ENCODE measurements at regions of chr6 and their contacts with region 1.

Region 1: GRCh38 chr6:150891888-150892485 is 26.5 kb downstream of the MTHFD1L start:
- DNase-seq: peak; percentile 67
- H3K4me3 Mint-ChIP-seq: no peak overlapping the region
- H3K27ac Mint-ChIP-seq: peak overlapping the region; percentile 16
- H3K4me1 Mint-ChIP-seq: peaks cover 49% of the 10 kb centered on the region
- H3K27me3 Mint-ChIP-seq: no peaks in the 10 kb centered on the region

Region 2: GRCh38 chr6:150343434-150343833 is 548.6 kb before region 1 on chr6:
- CTCF ChIA-PET with region 1: no interaction called
- POLR2A ChIA-PET with region 1: no interaction called
- DNase-seq: no peak
- H3K4me3 Mint-ChIP-seq: no peak overlapping the region
- H3K27ac Mint-ChIP-seq: no peak overlapping the region
- H3K4me1 Mint-ChIP-seq: no peaks in the 10 kb centered on the region
- H3K27me3 Mint-ChIP-seq: peaks cover 12% of the 10 kb centered on the region

Region 3: GRCh38 chr6:150902142-150902776 is 10.3 kb after region 1 on chr6:
- CTCF ChIA-PET with region 1: interaction called, 22 read pairs
- POLR2A ChIA-PET with region 1: interaction called, 3 read pairs
- DNase-seq: no peak
- H3K4me3 Mint-ChIP-seq: no peak overlapping the region
- H3K27ac Mint-ChIP-seq: no peak overlapping the region
- H3K4me1 Mint-ChIP-seq: peaks cover 14% of the 10 kb centered on the region
- H3K27me3 Mint-ChIP-seq: no peaks in the 10 kb centered on the region

Region 4: DNA sequence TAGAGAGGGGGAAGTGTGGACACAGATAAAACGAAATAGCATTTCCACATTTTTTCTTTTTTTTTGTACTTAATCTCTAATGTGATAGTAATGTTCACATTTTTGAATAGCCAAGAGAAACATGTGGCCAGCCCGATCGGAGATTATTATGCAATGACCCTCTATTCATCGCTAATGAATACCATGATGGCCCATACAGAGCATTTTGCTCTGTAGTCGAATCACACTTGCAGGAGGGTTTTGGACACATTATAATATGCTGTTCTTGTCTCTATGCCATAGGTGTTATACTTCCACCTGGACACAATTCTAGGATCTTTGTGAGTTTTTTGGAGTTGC is 33.6 kb after region 1 on chr6:
- CTCF ChIA-PET with region 1: interaction called, 15 read pairs
- POLR2A ChIA-PET with region 1: no interaction called
- DNase-seq: no peak
- H3K4me3 Mint-ChIP-seq: no peak overlapping the region
- H3K27ac Mint-ChIP-seq: no peak overlapping the region
- H3K4me1 Mint-ChIP-seq: no peaks in the 10 kb centered on the region
- H3K27me3 Mint-ChIP-seq: no peaks in the 10 kb centered on the region

Region 5: GRCh38 chr6:151004415-151005024 is 112.5 kb after region 1 on chr6:
- CTCF ChIA-PET with region 1: interaction called, 66 read pairs
- POLR2A ChIA-PET with region 1: interaction called, 3 read pairs
- DNase-seq: no peak
- H3K4me3 Mint-ChIP-seq: no peak overlapping the region
- H3K27ac Mint-ChIP-seq: peak overlapping the region; percentile 64
- H3K4me1 Mint-ChIP-seq: peaks cover 18% of the 10 kb centered on the region
- H3K27me3 Mint-ChIP-seq: no peaks in the 10 kb centered on the region

Region 6: DNA sequence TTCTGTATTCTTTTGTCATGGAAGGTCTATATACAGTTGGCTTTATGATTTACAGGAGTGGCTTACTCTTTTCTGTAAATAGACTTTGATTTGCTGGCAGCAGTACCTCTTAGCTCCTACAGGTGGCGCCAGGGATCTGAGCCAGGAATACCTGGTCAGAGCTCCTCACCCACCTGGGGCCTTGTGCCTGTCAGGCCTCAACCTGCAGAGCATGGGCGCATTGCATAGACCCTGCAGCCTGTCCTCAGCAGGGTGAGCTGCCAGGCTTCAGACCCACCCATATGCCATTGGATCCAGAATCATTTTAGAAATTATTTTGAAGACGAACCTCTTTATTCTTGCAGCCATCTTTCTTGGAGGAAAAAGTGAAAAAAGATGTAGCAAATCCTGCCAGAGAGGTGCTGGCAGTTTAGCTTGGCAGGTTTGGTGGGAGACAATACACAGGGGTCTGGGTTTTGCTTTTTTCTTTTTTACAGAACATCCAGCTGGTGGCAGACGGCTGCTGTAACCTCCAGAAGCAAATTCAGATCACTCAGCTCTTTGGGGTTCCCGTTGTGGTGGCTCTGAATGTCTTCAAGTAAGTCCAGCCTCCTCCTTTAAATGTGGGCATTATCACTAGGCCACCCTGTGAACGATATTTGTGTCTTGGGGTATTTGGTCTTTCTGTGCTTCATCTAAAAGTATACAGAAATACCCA is 122.6 kb after region 1 on chr6:
- CTCF ChIA-PET with region 1: interaction called, 66 read pairs
- POLR2A ChIA-PET with region 1: no interaction called
- DNase-seq: peak; percentile 62
- H3K4me3 Mint-ChIP-seq: no peak overlapping the region
- H3K27ac Mint-ChIP-seq: peak overlapping the region; percentile 14
- H3K4me1 Mint-ChIP-seq: peaks cover 13% of the 10 kb centered on the region
- H3K27me3 Mint-ChIP-seq: no peaks in the 10 kb centered on the region

Region 7: DNA sequence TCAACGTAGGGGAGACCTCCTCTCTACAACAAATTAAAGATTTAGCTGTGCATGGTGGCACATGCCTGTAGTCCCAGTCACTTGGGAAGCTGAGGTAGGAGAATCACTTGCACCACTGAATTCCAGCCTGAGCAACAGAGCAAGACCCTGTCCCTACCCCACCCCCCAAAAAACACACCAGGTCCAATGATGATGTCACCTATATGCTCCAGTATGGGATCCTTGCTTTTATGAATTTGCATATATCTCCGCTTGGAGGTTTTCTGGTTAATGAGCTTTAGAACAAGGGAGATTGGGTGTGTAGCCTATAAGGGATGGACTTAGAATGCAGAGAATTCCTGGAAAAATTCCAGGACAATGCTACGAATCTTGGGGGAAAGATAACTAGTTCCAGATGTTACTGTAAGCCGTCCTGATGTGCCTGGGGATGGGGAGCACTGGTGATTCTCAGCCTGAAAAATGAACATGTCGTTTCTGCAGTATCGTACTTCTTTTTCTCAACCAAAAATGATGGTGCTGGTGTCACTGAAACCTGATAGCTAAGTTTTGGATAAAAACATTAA is 438.2 kb after region 1 on chr6:
- CTCF ChIA-PET with region 1: interaction called, 247 read pairs
- POLR2A ChIA-PET with region 1: interaction called, 13 read pairs
- DNase-seq: no peak
- H3K4me3 Mint-ChIP-seq: no peak overlapping the region
- H3K27ac Mint-ChIP-seq: no peak overlapping the region
- H3K4me1 Mint-ChIP-seq: peaks cover 8% of the 10 kb centered on the region
- H3K27me3 Mint-ChIP-seq: peaks cover 41% of the 10 kb centered on the region

Region 8: GRCh38 chr6:151335930-151336329 is 443.9 kb after region 1 on chr6:
- CTCF ChIA-PET with region 1: interaction called, 58 read pairs
- POLR2A ChIA-PET with region 1: interaction called, 6 read pairs
- DNase-seq: no peak
- H3K4me3 Mint-ChIP-seq: no peak overlapping the region
- H3K27ac Mint-ChIP-seq: no peak overlapping the region
- H3K4me1 Mint-ChIP-seq: no peaks in the 10 kb centered on the region
- H3K27me3 Mint-ChIP-seq: peaks cover 19% of the 10 kb centered on the region

Measured in activated CD4-positive, alpha-beta memory T cell treated with anti-CD3 and anti-CD28 coated beads, Interleukin-2, amount 10 ng/mL, durations not matched to agents 7 days and 5 days (primary cell).